Colonic mucosa (tissue), 4 donors: ENCODE measurements at regions of chr3 and their contacts with region 1.

Region 1: GRCh38 chr3:173045770-173046382 is 95.2 kb downstream of the SPATA16 start:
- DNase-seq: no peak
- H3K4me3 ChIP-seq: no peak overlapping the region
- H3K27ac ChIP-seq: no peak overlapping the region
- H3K4me1 ChIP-seq: no peaks in the 10 kb centered on the region
- H3K27me3 ChIP-seq: no peaks in the 10 kb centered on the region
- CTCF ChIP-seq: no peak

Region 2: GRCh38 chr3:172836390-172836997 is 209.4 kb before region 1 on chr3:
- intact Hi-C with region 1: loop called (anchors 10 kb)
- DNase-seq: peak; percentile 45
- H3K4me3 ChIP-seq: no peak overlapping the region
- H3K27ac ChIP-seq: no peak overlapping the region
- H3K4me1 ChIP-seq: no peaks in the 10 kb centered on the region
- H3K27me3 ChIP-seq: no peaks in the 10 kb centered on the region
- CTCF ChIP-seq: peak; percentile 29

Region 3: GRCh38 chr3:172929451-172929850 is 116.4 kb before region 1 on chr3:
- intact Hi-C with region 1: no loop called
- DNase-seq: no peak
- H3K4me3 ChIP-seq: no peak overlapping the region
- H3K27ac ChIP-seq: no peak overlapping the region
- H3K4me1 ChIP-seq: no peaks in the 10 kb centered on the region
- H3K27me3 ChIP-seq: no peaks in the 10 kb centered on the region
- CTCF ChIP-seq: no peak